Activated CD4-positive, alpha-beta T cell treated with anti-CD3 and anti-CD28 coated beads for 36 hours (primary cell): ENCODE measurements at regions of chr12 and their contacts with region 1.

Region 1: GRCh38 chr12:9741726-9742125 is 8.8 kb upstream of the CLECL1 start:
- DNase-seq: peak; percentile 88
- ATAC-seq: peak; percentile 80
- H3K4me3 Mint-ChIP-seq: peak overlapping the region; percentile 67
- H3K27ac Mint-ChIP-seq: peak overlapping the region; percentile 79
- H3K4me1 Mint-ChIP-seq: peaks cover 72% of the 10 kb centered on the region
- H3K27me3 Mint-ChIP-seq: no peaks in the 10 kb centered on the region

Region 2: DNA sequence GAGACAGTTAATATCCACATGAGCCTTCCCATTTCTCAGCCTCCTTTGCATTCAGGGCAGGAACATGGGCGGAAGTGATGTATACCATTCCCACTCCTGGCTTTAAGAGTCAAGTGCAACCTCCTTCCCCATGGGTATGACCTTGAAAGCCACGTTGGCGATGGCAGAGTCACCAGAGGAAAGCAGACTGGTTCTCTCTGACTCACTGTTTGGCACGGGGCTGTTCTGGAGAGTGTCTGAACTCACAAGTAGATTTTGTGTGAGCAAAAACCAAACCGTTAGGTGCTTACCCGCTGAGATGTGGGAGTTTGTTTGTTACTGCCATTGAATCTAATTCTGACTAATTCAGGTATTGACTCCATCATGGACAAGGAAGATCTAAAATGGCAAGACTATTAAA is 496.8 kb before region 1 on chr12:
- CTCF ChIA-PET with region 1: no interaction called
- POLR2A ChIA-PET with region 1: no interaction called
- intact Hi-C with region 1: loop called in 1 of 2 experiments (anchors 2 kb)
- DNase-seq: peak; percentile 88
- ATAC-seq: peak; percentile 89
- H3K4me3 Mint-ChIP-seq: peak overlapping the region; percentile 46
- H3K27ac Mint-ChIP-seq: peak overlapping the region; percentile 89
- H3K4me1 Mint-ChIP-seq: peaks cover 50% of the 10 kb centered on the region
- H3K27me3 Mint-ChIP-seq: peaks cover 10% of the 10 kb centered on the region

Region 3: GRCh38 chr12:9647825-9648700 is 93.7 kb before region 1 on chr12:
- CTCF ChIA-PET with region 1: interaction called, 8 read pairs
- POLR2A ChIA-PET with region 1: interaction called, 6 read pairs
- intact Hi-C with region 1: loop called (anchors 1 kb)
- DNase-seq: peak; percentile 96
- ATAC-seq: peak; percentile 72
- H3K4me3 Mint-ChIP-seq: peak overlapping the region; percentile 100
- H3K27ac Mint-ChIP-seq: peak overlapping the region; percentile 100
- H3K4me1 Mint-ChIP-seq: peaks cover 58% of the 10 kb centered on the region
- H3K27me3 Mint-ChIP-seq: no peaks in the 10 kb centered on the region

Region 4: GRCh38 chr12:9707864-9708808 is 33.6 kb before region 1 on chr12:
- CTCF ChIA-PET with region 1: interaction called, 20 read pairs
- POLR2A ChIA-PET with region 1: no interaction called
- intact Hi-C with region 1: loop called in 1 of 2 experiments (anchors 5 kb)
- DNase-seq: peak; percentile 82
- ATAC-seq: peak; percentile 85
- H3K4me3 Mint-ChIP-seq: peak overlapping the region; percentile 60
- H3K27ac Mint-ChIP-seq: peak overlapping the region; percentile 94
- H3K4me1 Mint-ChIP-seq: peaks cover 50% of the 10 kb centered on the region
- H3K27me3 Mint-ChIP-seq: no peaks in the 10 kb centered on the region

Region 5: DNA sequence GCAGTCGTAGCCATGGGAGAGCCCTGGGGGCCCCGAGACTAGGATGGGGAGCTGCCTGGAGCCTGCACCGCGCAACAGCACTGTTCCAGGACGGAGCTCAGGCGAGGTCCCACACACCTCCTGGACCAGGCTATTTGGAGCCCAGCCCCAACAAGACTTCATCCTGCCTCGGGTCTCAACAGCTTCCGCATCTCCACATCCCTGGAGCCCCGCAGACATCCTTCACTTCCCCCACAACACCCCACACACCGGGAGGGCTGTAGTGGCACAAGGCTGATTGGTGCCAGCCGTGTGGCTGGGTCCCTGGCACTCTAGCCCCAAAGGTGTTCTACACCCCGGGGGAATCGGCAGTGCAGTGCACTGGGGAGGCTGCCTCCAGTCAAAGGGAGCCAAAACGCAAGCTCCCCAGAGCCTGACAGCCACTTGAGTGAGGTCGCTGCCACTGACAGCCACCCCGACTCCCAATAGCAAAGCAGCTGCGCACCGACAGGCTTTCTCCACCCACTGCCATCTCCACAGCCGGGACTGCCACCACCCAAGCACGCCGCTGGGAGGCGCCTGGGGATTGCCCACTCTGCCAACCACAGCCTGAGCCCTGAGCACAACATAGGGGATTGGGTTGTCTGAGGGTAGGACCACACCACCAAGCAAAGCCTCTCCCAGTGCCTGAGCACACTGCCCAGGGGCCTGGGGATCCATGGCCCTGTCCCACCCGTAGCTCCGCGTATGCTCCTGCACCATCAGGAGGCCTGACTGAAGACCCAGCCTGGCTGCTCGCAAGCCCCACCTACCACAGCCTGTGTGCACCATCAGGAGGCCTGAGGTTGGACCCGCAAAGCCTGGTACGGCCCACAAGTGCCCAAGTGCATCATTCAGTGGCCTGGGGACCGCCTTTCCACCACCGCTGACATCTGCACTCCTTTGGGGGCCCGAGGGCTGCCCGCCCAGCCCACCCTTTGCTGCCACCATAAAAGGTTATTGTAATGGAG is 72.4 kb after region 1 on chr12:
- CTCF ChIA-PET with region 1: interaction called, 291 read pairs
- POLR2A ChIA-PET with region 1: no interaction called
- intact Hi-C with region 1: no loop called
- DNase-seq: peak; percentile 96
- ATAC-seq: peak; percentile 97
- H3K4me3 Mint-ChIP-seq: peak overlapping the region; percentile 81
- H3K27ac Mint-ChIP-seq: peak overlapping the region; percentile 67
- H3K4me1 Mint-ChIP-seq: peaks cover 12% of the 10 kb centered on the region
- H3K27me3 Mint-ChIP-seq: peaks cover 8% of the 10 kb centered on the region

Region 6: DNA sequence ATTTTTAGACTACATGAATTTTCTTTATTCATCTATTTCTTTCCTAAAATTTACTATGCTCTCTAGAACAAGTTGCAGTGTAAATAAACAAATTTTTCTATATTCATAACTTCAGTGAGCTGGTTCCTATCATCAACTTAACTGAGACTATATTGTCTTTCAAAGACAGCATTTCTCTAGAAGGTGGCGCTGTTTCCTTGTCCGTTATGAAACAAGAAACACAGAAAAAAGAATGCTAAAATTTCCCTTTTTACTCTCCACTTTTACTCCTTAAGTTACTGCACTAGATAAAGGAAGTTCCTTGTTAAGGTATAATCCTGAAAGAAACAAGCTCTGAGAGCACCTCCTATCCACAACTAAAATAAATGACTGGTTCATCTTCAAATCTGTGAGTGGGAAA is 198.6 kb after region 1 on chr12:
- CTCF ChIA-PET with region 1: no interaction called
- POLR2A ChIA-PET with region 1: no interaction called
- intact Hi-C with region 1: loop called in 1 of 2 experiments (anchors 5 kb)
- DNase-seq: no peak
- ATAC-seq: no peak
- H3K4me3 Mint-ChIP-seq: no peak overlapping the region
- H3K27ac Mint-ChIP-seq: no peak overlapping the region
- H3K4me1 Mint-ChIP-seq: peaks cover 14% of the 10 kb centered on the region
- H3K27me3 Mint-ChIP-seq: peaks cover 3% of the 10 kb centered on the region

Region 7: GRCh38 chr12:10212201-10213131 is 470.7 kb after region 1 on chr12 and contains the start of gene GABARAPL1:
- CTCF ChIA-PET with region 1: no interaction called
- POLR2A ChIA-PET with region 1: interaction called, 3 read pairs
- intact Hi-C with region 1: loop called in 1 of 2 experiments (anchors 5 kb)
- DNase-seq: peak; percentile 93
- ATAC-seq: peak; percentile 86
- H3K4me3 Mint-ChIP-seq: peak within 1 kb of the TSS; percentile 82
- H3K27ac Mint-ChIP-seq: peak within 1 kb of the TSS; percentile 87
- H3K4me1 Mint-ChIP-seq: peaks cover 29% of the 10 kb centered on the region
- H3K27me3 Mint-ChIP-seq: no peaks in the 10 kb centered on the region
- total RNA-seq, gene GABARAPL1: 2.3 to 2.9 TPM